MCF 10A (cell line): ENCODE measurements at regions of chr11 and their contacts with region 1.

Region 1: DNA sequence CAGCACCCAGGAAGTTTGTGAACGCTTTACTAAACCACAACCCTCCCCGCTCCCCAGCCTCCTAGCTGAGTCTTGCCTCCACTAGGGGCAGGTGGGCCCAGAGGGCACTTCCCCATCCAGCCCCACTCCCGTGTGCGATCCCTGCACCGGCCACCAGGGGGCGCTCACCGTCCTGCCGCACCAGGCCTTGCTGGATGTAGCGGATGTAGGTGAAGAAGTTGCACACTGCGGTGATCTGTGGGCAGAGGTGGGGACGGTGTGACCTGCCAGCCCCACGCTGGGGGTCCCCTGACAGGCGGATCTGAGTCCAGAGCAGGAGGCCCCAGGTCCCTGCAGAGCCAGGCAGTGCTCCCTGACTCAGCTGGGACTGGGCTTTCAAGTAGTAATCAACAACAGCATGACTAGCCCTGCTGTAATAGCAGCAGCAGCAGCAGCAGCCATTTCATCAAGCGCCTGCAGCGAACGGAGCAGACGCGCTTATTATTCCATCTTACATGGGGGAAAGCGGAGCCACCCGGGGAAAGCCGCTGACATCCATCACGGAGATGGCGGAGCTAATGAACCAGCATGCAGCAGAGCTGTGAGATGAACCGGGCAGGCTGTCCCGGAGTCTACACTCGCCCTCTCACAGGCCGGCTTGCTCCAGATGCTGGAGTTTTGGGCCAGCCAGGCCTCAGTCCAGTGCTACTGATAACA is 7.9 kb upstream of the FADS3 start:
- DNase-seq: peak; percentile 76
- H3K4me3 Mint-ChIP-seq: no peak overlapping the region
- H3K27ac Mint-ChIP-seq: no peak overlapping the region
- H3K4me1 Mint-ChIP-seq: peaks cover 1% of the 10 kb centered on the region
- H3K27me3 Mint-ChIP-seq: no peaks in the 10 kb centered on the region
- CTCF ChIP-seq: peak; percentile 100

Region 2: GRCh38 chr11:61769169-61769920 is 129.9 kb before region 1 on chr11:
- CTCF ChIA-PET with region 1: no interaction called
- POLR2A ChIA-PET with region 1: no interaction called
- intact Hi-C with region 1: no loop called
- DNase-seq: no peak
- H3K4me3 Mint-ChIP-seq: no peak overlapping the region
- H3K27ac Mint-ChIP-seq: no peak overlapping the region
- H3K4me1 Mint-ChIP-seq: no peaks in the 10 kb centered on the region
- H3K27me3 Mint-ChIP-seq: no peaks in the 10 kb centered on the region
- CTCF ChIP-seq: no peak

Region 3: GRCh38 chr11:61885166-61885778 is 14.0 kb before region 1 on chr11:
- CTCF ChIA-PET with region 1: interaction called, 14 read pairs
- POLR2A ChIA-PET with region 1: no interaction called
- intact Hi-C with region 1: no loop called
- DNase-seq: no peak
- H3K4me3 Mint-ChIP-seq: no peak overlapping the region
- H3K27ac Mint-ChIP-seq: no peak overlapping the region
- H3K4me1 Mint-ChIP-seq: peaks cover 31% of the 10 kb centered on the region
- H3K27me3 Mint-ChIP-seq: no peaks in the 10 kb centered on the region
- CTCF ChIP-seq: no peak

Region 4: DNA sequence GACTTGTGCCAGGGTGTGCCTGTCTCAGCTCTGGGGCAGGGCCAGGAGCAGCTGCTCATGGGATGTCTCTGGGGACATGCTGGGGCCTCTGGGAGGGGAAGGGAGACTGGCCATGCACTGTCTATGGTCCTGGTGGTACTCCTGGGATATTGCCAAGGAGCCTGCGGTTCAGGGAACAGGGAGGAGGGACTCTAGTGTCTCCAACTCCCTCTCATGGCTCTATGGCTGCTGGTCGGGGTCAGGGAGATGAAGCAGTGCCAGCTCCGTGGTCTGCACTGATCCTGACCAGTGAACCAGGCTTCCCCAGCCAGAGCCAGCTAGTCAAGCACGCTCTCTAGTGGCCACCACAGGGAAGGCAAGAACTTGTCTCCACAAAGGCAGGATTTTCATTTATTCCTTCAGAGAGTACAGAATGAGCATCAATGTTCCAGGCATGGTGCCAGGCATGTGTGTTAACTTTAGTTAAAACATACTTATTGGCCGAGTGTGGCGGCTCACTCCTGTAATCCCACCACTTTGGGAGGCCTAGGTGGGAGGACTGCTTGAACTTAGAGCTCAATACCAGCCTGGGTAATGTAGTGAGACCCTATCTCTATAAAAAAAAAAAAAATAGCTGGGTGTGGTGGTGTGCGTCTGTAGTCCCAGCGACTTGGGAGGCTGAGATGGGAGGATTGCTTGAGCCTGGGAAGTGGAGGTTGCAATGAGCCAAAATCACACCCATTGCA is 48.4 kb after region 1 on chr11:
- CTCF ChIA-PET with region 1: interaction called, 217 read pairs
- POLR2A ChIA-PET with region 1: interaction called, 3 read pairs
- intact Hi-C with region 1: loop called (anchors 1 kb)
- DNase-seq: peak; percentile 89
- H3K4me3 Mint-ChIP-seq: no peak overlapping the region
- H3K27ac Mint-ChIP-seq: no peak overlapping the region
- H3K4me1 Mint-ChIP-seq: peaks cover 15% of the 10 kb centered on the region
- H3K27me3 Mint-ChIP-seq: peaks cover 11% of the 10 kb centered on the region
- CTCF ChIP-seq: peak; percentile 84

Region 5: DNA sequence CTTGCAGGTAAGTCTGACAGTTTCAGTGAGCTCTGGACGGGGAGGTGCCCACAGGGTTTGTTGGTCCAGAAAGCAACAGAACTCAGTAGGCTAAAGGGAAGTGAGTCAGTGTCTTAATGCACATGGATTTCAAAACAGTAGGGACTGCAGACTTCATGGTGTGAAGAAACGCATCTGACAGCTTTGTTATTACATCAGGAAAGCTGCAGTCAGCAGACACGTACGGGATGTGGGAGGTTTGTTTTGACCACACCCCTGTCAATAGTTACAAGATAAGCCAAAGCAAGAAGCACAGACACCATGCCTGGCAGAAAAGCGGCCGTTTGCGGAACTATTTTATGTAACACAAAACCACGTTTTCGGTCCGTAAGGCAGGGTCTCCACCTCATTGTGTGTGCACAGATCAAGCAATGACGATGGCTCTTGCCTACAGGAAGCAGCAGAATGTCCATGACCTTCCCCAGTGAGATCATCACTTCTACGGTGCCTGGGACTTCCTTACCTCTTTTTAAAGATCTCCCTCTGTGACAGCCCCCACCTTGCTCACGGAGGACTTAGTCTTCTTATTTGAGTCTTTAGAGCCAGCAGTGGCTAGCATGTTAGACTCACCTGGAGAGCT is 126.3 kb after region 1 on chr11:
- CTCF ChIA-PET with region 1: interaction called, 19 read pairs
- POLR2A ChIA-PET with region 1: no interaction called
- intact Hi-C with region 1: no loop called
- DNase-seq: peak; percentile 98
- H3K4me3 Mint-ChIP-seq: peak overlapping the region; percentile 58
- H3K27ac Mint-ChIP-seq: peak overlapping the region; percentile 97
- H3K4me1 Mint-ChIP-seq: peaks cover 34% of the 10 kb centered on the region
- H3K27me3 Mint-ChIP-seq: no peaks in the 10 kb centered on the region
- CTCF ChIP-seq: no peak

Region 6: GRCh38 chr11:62081378-62082291 is 182.3 kb after region 1 on chr11:
- CTCF ChIA-PET with region 1: interaction called, 161 read pairs
- POLR2A ChIA-PET with region 1: interaction called, 3 read pairs
- intact Hi-C with region 1: loop called (anchors 1 kb)
- DNase-seq: peak; percentile 66
- H3K4me3 Mint-ChIP-seq: no peak overlapping the region
- H3K27ac Mint-ChIP-seq: no peak overlapping the region
- H3K4me1 Mint-ChIP-seq: peaks cover 7% of the 10 kb centered on the region
- H3K27me3 Mint-ChIP-seq: no peaks in the 10 kb centered on the region
- CTCF ChIP-seq: peak; percentile 87